Activated CD4-positive, alpha-beta T cell treated with anti-CD3 and anti-CD28 coated beads, Interleukin-2, amount 10 ng/mL, durations not matched to agents 7 days and 5 days (primary cell): ENCODE measurements at regions of chr7 and their contacts with region 1.

Region 1: GRCh38 chr7:105531792-105532671 is at the start of gene RINT1:
- DNase-seq: peak; percentile 89
- H3K4me3 Mint-ChIP-seq: peak within 1 kb of the TSS; percentile 94
- H3K27ac Mint-ChIP-seq: peak within 1 kb of the TSS; percentile 99
- H3K4me1 Mint-ChIP-seq: peaks cover 42% of the 10 kb centered on the region
- H3K27me3 Mint-ChIP-seq: peaks cover under 1% of the 10 kb centered on the region
- total RNA-seq, gene RINT1: 20.2 to 22.0 TPM

Region 2: DNA sequence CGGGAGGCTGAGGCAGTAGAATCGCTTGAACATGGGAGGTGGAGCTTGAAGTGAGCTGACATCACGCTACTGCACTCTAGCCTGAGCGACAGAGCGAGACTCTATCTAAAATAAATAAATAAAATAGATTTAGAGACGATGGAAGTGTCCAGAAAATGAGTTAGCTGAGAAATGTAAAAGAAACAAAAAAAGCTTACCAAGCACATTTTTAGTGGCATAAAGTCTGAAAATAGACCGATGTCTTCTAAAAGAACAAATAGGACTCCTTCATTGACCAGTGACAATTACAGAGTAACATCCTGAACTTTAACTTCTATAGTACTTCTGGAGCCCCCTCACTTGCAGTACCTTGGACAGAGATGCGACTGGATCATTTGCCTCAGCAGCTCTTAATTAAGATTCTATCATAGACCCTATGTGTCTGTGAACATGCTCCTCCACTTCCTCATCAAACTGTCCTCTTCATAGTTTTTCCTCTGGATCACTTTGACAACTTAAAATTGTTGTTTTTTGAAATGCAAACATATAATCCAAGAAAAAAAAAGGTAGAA is 118.1 kb before region 1 on chr7:
- CTCF ChIA-PET with region 1: no interaction called
- POLR2A ChIA-PET with region 1: no interaction called
- DNase-seq: no peak
- H3K4me3 Mint-ChIP-seq: no peak overlapping the region
- H3K27ac Mint-ChIP-seq: no peak overlapping the region
- H3K4me1 Mint-ChIP-seq: peaks cover 3% of the 10 kb centered on the region
- H3K27me3 Mint-ChIP-seq: no peaks in the 10 kb centered on the region

Region 3: DNA sequence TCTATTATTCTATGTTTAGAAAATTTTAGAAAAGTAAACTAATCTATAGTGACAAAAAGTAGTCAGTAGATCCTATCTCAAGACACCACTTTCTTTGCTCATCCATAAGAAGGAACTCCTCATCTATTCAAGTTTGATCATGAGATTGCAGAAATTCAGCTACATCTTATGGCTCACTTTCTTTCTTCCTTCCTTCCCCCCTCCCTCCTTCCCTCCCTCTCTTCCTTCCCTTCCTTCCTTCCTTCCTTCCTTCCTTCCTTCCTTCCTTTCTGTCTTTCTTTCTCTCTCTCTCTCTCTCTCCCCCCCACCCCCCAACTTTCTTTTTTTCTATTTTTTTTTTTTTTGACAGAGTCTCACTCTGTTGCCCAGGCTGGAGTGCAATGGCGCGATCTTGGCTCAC is 108.0 kb before region 1 on chr7:
- CTCF ChIA-PET with region 1: no interaction called
- POLR2A ChIA-PET with region 1: no interaction called
- DNase-seq: no peak
- H3K4me3 Mint-ChIP-seq: no peak overlapping the region
- H3K27ac Mint-ChIP-seq: no peak overlapping the region
- H3K4me1 Mint-ChIP-seq: no peaks in the 10 kb centered on the region
- H3K27me3 Mint-ChIP-seq: no peaks in the 10 kb centered on the region

Region 4: GRCh38 chr7:105512415-105512814 is 19.6 kb before region 1 on chr7:
- CTCF ChIA-PET with region 1: interaction called, 12 read pairs
- POLR2A ChIA-PET with region 1: no interaction called
- DNase-seq: no peak
- H3K4me3 Mint-ChIP-seq: no peak overlapping the region
- H3K27ac Mint-ChIP-seq: peak overlapping the region; percentile 64
- H3K4me1 Mint-ChIP-seq: peaks cover 23% of the 10 kb centered on the region
- H3K27me3 Mint-ChIP-seq: no peaks in the 10 kb centered on the region

Region 5: DNA sequence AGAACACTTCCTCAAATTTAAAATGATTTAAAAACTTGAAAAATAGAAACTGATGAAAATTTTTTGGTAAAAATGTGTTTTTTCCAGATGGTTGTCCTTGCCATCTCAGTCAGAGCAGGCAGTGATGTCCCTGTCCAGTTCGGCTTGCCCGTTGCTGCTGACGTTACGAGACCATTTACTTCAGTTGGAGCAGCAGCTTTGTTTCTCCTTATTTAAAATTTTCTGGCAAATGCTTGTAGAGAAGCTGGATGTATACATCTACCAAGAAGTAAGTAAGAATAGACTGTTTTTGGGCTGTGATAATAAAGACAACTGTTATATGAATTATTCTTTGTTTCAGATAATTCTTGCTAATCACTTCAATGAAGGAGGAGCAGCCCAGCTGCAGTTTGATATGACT is 33.2 kb after region 1 on chr7:
- CTCF ChIA-PET with region 1: no interaction called
- POLR2A ChIA-PET with region 1: no interaction called
- DNase-seq: no peak
- H3K4me3 Mint-ChIP-seq: no peak overlapping the region
- H3K27ac Mint-ChIP-seq: no peak overlapping the region
- H3K4me1 Mint-ChIP-seq: no peaks in the 10 kb centered on the region
- H3K27me3 Mint-ChIP-seq: no peaks in the 10 kb centered on the region